Activated naive CD4-positive, alpha-beta T cell treated with anti-CD3 and anti-CD28 coated beads for 36 hours (primary cell): ENCODE measurements at regions of chr1 and their contacts with region 1.

Region 1: DNA sequence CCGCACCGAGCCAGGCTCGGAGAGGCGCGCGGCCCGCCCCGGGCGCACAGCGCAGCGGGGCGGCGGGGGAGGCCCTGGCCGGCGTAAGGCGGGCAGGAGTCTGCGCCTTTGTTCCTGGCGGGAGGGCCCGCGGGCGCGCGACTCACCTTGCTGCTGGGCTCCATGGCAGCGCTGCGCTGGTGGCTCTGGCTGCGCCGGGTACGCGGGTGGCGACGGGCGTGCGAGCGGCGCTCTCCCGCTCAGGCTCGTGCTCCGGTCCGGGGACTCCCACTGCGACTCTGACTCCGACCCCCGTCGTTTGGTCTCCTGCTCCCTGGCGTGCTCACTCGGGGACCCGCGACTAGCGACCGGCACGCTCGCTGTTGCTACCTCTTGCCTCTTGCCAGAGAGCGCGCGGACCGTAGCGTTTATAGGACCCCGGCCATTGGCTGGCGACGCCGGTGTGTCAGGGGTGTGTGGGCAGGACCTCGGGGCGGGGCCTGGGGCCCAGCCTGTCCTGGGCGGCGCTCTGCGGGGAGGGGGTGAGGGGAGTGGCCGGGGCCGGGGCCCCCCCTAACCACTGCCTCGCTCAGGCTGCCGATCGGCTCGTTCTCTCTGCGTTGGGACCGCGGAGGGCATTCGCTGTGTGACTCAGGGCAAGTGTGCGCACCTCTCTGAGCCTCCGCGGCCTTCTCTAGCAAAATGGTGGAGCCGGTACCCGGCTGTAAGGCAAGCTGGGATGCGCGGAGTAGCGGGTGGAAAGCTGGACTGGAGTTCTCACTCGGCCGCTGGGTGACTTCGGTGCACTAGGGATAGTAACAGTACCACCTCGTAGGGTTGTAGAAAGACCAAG is at the start of gene SLC2A1:
- DNase-seq: peak; percentile 97
- H3K4me3 Mint-ChIP-seq: peak within 1 kb of the TSS; percentile 97
- H3K27ac Mint-ChIP-seq: peak within 1 kb of the TSS; percentile 96
- H3K4me1 Mint-ChIP-seq: peaks cover 45% of the 10 kb centered on the region
- H3K27me3 Mint-ChIP-seq: no peaks in the 10 kb centered on the region
- total RNA-seq, gene SLC2A1: 21.2 to 22.7 TPM

Region 2: GRCh38 chr1:42456010-42456758 is 502.5 kb before region 1 on chr1 and contains the starts of genes PPCS and ZMYND12:
- CTCF ChIA-PET with region 1: no interaction called
- intact Hi-C with region 1: loop called (anchors 2 kb)
- DNase-seq: peak; percentile 94
- H3K4me3 Mint-ChIP-seq: peak within 1 kb of the TSS; percentile 95
- H3K27ac Mint-ChIP-seq: peak within 1 kb of the TSS; percentile 94
- H3K4me1 Mint-ChIP-seq: peaks cover 23% of the 10 kb centered on the region
- H3K27me3 Mint-ChIP-seq: no peaks in the 10 kb centered on the region
- total RNA-seq, gene PPCS: 47.4 to 49.6 TPM
- total RNA-seq, gene ZMYND12: 0.74 to 0.76 TPM

Region 3: GRCh38 chr1:42904434-42904833 is 54.3 kb before region 1 on chr1:
- CTCF ChIA-PET with region 1: no interaction called
- intact Hi-C with region 1: no loop called
- DNase-seq: no peak
- H3K4me3 Mint-ChIP-seq: no peak overlapping the region
- H3K27ac Mint-ChIP-seq: no peak overlapping the region
- H3K4me1 Mint-ChIP-seq: no peaks in the 10 kb centered on the region
- H3K27me3 Mint-ChIP-seq: no peaks in the 10 kb centered on the region

Region 4: GRCh38 chr1:42924082-42924850 is 34.4 kb before region 1 on chr1:
- CTCF ChIA-PET with region 1: interaction called, 4 read pairs
- intact Hi-C with region 1: loop called (anchors 1 kb)
- DNase-seq: peak; percentile 95
- H3K4me3 Mint-ChIP-seq: peak overlapping the region; percentile 92
- H3K27ac Mint-ChIP-seq: peak overlapping the region; percentile 88
- H3K4me1 Mint-ChIP-seq: peaks cover 23% of the 10 kb centered on the region
- H3K27me3 Mint-ChIP-seq: no peaks in the 10 kb centered on the region

Region 5: DNA sequence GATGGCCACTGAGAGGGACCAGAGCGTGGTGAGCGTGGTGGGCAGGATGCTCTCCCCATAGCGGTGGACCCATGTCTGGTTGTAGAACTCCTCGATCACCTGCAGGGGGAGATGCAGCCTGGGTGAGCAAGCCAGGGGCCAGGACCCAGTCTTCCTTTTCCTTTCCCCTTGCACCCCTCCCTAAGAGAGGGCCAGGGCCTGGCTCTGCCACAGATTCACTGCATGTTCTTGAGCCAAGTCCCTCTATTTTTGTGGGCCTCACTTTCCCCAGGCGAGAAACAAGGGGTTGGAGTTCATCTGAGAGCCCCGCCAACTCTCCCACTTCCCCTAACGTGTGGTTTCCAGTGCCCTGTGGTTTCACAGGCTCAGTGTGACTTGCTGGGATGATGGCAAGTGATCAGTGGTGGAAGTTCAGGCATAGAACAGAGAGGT is 27.6 kb before region 1 on chr1:
- CTCF ChIA-PET with region 1: interaction called, 4 read pairs
- intact Hi-C with region 1: loop called (anchors 1 kb)
- DNase-seq: peak; percentile 65
- H3K4me3 Mint-ChIP-seq: peak overlapping the region; percentile 60
- H3K27ac Mint-ChIP-seq: peak overlapping the region; percentile 97
- H3K4me1 Mint-ChIP-seq: peaks cover 57% of the 10 kb centered on the region
- H3K27me3 Mint-ChIP-seq: no peaks in the 10 kb centered on the region

Region 6: GRCh38 chr1:43171876-43172526 is 213.3 kb after region 1 on chr1 and contains the starts of genes CFAP57 and EBNA1BP2:
- CTCF ChIA-PET with region 1: no interaction called
- intact Hi-C with region 1: loop called (anchors 2 kb)
- DNase-seq: peak; percentile 96
- H3K4me3 Mint-ChIP-seq: peak within 1 kb of the TSS; percentile 99
- H3K27ac Mint-ChIP-seq: peak within 1 kb of the TSS; percentile 90
- H3K4me1 Mint-ChIP-seq: peaks cover 39% of the 10 kb centered on the region
- H3K27me3 Mint-ChIP-seq: peaks cover 2% of the 10 kb centered on the region
- total RNA-seq, gene CFAP57: 0.12 to 0.14 TPM
- total RNA-seq, gene EBNA1BP2: 88.0 to 88.3 TPM

Region 7: DNA sequence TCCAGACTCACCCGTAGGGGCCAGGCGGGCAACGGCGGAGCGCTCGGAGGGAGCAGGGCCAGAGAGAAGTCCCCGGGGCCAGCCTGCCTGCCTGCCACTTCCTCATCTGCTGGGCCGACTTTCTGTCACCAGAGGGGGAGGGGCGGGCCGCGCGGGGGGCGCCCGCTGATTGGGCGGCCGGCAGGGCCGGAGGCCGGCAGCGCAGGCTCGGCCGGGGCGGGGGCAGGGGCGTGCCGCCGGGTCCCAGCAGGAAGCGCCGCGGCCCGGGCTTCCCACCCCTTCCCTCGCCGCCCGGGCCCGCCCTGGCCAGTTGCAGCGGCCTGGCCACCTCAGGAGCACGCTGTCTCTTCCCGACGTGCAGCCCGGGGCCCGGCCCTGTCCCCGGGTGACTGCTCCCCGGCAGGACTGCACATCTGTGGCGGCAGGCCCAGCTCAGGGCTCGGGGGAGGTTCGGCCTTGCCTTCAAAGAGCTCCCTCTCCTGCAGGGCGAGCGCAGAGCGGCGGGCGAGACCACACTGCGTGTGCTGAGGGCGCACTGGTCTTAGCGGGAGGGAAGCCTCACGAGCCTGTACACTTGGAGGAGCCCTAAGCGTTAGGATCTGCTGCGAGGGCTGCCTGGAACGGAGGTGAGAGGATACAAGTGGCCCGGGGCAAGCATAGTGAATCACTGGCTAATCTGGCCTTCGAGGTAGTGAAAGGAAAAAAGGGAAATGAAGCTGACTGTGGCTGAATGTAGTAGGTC is 409.4 kb after region 1 on chr1 and contains the start of gene ELOVL1:
- CTCF ChIA-PET with region 1: no interaction called
- intact Hi-C with region 1: loop called (anchors 5 kb)
- DNase-seq: peak; percentile 91
- H3K4me3 Mint-ChIP-seq: peak within 1 kb of the TSS; percentile 88
- H3K27ac Mint-ChIP-seq: peak within 1 kb of the TSS; percentile 87
- H3K4me1 Mint-ChIP-seq: peaks cover 35% of the 10 kb centered on the region
- H3K27me3 Mint-ChIP-seq: no peaks in the 10 kb centered on the region
- total RNA-seq, gene ELOVL1: 42.8 to 44.2 TPM